ENCODE measurements at regions of chr5 and their contacts with region 1.

Region 1: DNA sequence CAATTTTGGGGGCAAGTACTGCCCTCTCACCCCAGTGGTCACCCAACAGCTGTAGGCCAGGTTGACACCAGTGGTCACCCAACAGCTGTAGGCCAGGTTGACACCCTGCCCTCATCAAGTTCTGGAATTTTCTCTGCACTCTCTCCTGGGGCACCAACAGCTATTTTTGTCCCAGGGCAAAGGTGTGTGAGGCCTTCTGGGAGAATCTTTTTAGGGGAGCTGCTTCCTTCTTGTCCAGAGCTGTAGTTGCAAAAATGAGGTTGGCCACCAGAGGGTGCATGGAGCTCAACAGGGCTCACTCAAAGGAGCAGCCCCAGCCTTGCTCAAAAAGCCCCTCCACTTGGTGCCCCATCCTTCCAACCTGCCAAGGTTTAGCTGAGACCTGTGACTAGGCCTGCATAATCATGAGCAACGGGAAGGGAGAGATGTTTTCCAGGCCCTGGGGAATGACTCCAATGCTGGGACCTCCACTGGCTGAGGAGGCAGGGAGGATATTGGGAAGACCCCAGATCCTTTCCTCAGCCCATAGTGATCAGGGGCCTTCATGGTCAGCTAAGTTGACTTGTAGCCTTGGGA is 10.6 kb upstream of the P4HA2 start:
- DNase-seq: no peak
- H3K4me3 ChIP-seq: no peak overlapping the region
- H3K27ac ChIP-seq: no peak overlapping the region
- H3K27me3 ChIP-seq: no peaks in the 10 kb centered on the region
- CTCF ChIP-seq: peak; percentile 88

Region 2: DNA sequence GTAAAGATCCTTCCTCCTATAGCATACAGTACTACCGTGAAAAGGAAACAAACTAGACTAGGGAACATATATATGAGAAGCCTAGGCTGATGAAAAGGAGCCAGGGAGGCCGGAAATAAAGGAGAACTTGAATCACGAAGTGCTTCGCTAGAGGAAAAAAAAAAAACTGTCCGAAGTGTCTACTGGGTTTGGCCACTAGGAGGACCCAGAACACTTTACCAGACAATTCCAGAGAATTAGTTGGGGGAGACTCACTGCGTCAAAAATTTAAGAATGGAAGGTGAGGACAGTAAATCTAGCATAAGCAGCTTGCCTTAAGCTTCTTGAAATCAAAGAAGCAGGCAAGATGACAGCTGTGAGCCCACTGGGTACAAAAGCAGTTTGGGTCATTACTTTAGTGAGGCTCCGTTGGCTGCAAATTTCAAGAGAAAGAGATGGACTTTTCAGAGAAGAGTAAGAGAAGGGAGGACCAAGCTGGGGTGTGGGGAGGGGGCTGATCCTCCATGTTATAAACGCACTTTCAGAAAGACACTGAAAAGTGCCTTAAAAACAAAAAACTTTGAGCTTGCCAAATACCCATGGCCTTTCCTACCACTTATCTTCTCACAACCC is 58.0 kb before region 1 on chr5:
- CTCF ChIA-PET with region 1: interaction called, 21 read pairs
- POLR2A ChIA-PET with region 1: no interaction called
- DNase-seq: peak; percentile 29
- H3K4me3 ChIP-seq: no peak overlapping the region
- H3K27ac ChIP-seq: no peak overlapping the region
- H3K27me3 ChIP-seq: no peaks in the 10 kb centered on the region
- CTCF ChIP-seq: peak; percentile 87

Region 3: GRCh38 chr5:132205385-132206125 is 32.7 kb before region 1 on chr5:
- CTCF ChIA-PET with region 1: interaction called, 18 read pairs
- POLR2A ChIA-PET with region 1: no interaction called
- DNase-seq: no peak
- H3K4me3 ChIP-seq: no peak overlapping the region
- H3K27ac ChIP-seq: peak overlapping the region; percentile 2
- H3K27me3 ChIP-seq: no peaks in the 10 kb centered on the region
- CTCF ChIP-seq: no peak

Region 4: GRCh38 chr5:132227485-132228240 is 10.6 kb before region 1 on chr5 and contains the start of gene P4HA2:
- CTCF ChIA-PET with region 1: interaction called, 84 read pairs
- POLR2A ChIA-PET with region 1: no interaction called
- DNase-seq: no peak
- H3K4me3 ChIP-seq: peak within 1 kb of the TSS; percentile 72
- H3K27ac ChIP-seq: peak within 1 kb of the TSS; percentile 2
- H3K27me3 ChIP-seq: peaks cover 3% of the 10 kb centered on the region
- CTCF ChIP-seq: no peak
- polyA plus RNA-seq, gene P4HA2: 178 and 186 TPM in 2 replicates

Region 5: GRCh38 chr5:132260714-132261551 is 22.7 kb after region 1 on chr5:
- CTCF ChIA-PET with region 1: interaction called, 55 read pairs
- POLR2A ChIA-PET with region 1: interaction called, 5 read pairs
- DNase-seq: peak; percentile 56
- H3K4me3 ChIP-seq: peak overlapping the region; percentile 37
- H3K27ac ChIP-seq: peak overlapping the region; percentile 42
- H3K27me3 ChIP-seq: no peaks in the 10 kb centered on the region
- CTCF ChIP-seq: no peak

Region 6: GRCh38 chr5:132283423-132284043 is 45.3 kb after region 1 on chr5:
- CTCF ChIA-PET with region 1: interaction called, 14 read pairs
- POLR2A ChIA-PET with region 1: no interaction called
- DNase-seq: no peak
- H3K4me3 ChIP-seq: no peak overlapping the region
- H3K27ac ChIP-seq: no peak overlapping the region
- H3K27me3 ChIP-seq: peaks cover 3% of the 10 kb centered on the region
- CTCF ChIP-seq: peak; percentile 67

Region 7: GRCh38 chr5:132369474-132370180 is 131.4 kb after region 1 on chr5 and contains the start of gene SLC22A5:
- CTCF ChIA-PET with region 1: interaction called, 14 read pairs
- POLR2A ChIA-PET with region 1: no interaction called
- DNase-seq: no peak
- H3K4me3 ChIP-seq: peak within 1 kb of the TSS; percentile 65
- H3K27ac ChIP-seq: no peak within 1 kb of the TSS
- H3K27me3 ChIP-seq: no peaks in the 10 kb centered on the region
- CTCF ChIP-seq: no peak
- polyA plus RNA-seq, gene SLC22A5: 6.9 TPM in 2 replicates

Region 8: GRCh38 chr5:133147411-133147810 is 909.2 kb after region 1 on chr5:
- CTCF ChIA-PET with region 1: no interaction called
- POLR2A ChIA-PET with region 1: no interaction called
- DNase-seq: no peak
- H3K4me3 ChIP-seq: no peak overlapping the region
- H3K27ac ChIP-seq: no peak overlapping the region
- H3K27me3 ChIP-seq: peaks cover 2% of the 10 kb centered on the region
- CTCF ChIP-seq: no peak